ENCODE measurements at regions of chr3 and their contacts with region 1.

Region 1: DNA sequence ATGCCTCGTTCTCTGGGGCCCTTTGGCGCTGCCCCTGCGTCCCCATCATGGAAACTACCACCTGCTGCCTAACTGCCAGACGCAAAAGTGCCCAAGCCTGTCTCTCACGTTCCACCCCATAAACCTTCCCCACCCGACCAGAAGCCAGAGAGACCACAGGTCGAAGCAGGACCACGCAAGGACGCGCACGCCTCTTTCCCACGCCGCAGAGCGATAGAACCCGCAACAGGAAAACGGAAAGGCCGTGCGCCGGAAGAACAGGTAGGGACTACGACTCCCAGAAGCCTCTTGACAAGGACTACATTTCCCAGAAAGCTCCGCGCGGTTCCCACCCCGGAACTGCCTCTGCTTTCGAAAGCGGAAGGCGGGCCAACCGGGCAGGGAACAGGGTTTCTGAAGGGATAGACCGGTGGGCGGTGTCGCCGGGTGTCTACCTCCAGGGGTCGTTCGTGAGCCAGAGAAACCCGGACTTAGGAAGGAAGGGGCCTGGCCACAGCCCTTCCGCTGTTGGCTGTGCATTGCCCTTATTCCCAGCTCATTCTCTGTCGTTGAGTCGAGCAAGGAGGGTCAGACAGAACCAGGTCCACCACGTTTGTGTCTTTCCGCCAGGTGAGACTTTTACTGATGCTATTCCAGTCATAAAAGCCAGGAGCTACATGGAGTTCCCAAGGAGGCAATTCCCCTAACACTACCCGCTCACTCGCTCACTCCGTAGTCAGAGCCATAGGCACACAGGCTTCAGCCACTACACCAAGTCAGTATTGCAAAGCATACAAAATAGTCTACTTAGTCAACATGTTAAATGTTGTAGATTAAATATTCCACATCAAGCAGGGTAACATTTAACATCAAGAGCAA is 56.6 kb upstream of the ZBTB38 start:
- DNase-seq: peak; percentile 93 to 99 (median 97)
- ATAC-seq: peak; percentile 88
- H3K4me3 ChIP-seq: peak overlapping the region; percentile 86
- H3K4me3 Mint-ChIP-seq: peak overlapping the region; percentile 97
- H3K27ac ChIP-seq: peak overlapping the region; percentile 62 to 75
- H3K27ac Mint-ChIP-seq: peak overlapping the region; percentile 92
- H3K4me1 ChIP-seq: peaks cover 48% of the 10 kb centered on the region
- H3K4me1 Mint-ChIP-seq: peaks cover 67% of the 10 kb centered on the region
- H3K27me3 ChIP-seq: no peaks in the 10 kb centered on the region
- H3K27me3 Mint-ChIP-seq: no peaks in the 10 kb centered on the region
- CTCF ChIP-seq: peak; percentile 65

Region 2: GRCh38 chr3:141266797-141267555 is 44.7 kb before region 1 on chr3:
- CTCF ChIA-PET with region 1: no interaction called
- POLR2A ChIA-PET with region 1: interaction called, 34 read pairs
- intact Hi-C with region 1: no loop called
- DNase-seq: peak in 13 of 14 experiments; percentile 7 to 71 (median 51)
- ATAC-seq: peak; percentile 81
- H3K4me3 ChIP-seq: peak overlapping the region; percentile 64
- H3K4me3 Mint-ChIP-seq: peak overlapping the region; percentile 90
- H3K27ac ChIP-seq: peak overlapping the region; percentile 72 to 84
- H3K27ac Mint-ChIP-seq: peak overlapping the region; percentile 96
- H3K4me1 ChIP-seq: peaks cover 35% of the 10 kb centered on the region
- H3K4me1 Mint-ChIP-seq: peaks cover 49% of the 10 kb centered on the region
- H3K27me3 ChIP-seq: no peaks in the 10 kb centered on the region
- H3K27me3 Mint-ChIP-seq: no peaks in the 10 kb centered on the region
- CTCF ChIP-seq: no peak

Region 3: DNA sequence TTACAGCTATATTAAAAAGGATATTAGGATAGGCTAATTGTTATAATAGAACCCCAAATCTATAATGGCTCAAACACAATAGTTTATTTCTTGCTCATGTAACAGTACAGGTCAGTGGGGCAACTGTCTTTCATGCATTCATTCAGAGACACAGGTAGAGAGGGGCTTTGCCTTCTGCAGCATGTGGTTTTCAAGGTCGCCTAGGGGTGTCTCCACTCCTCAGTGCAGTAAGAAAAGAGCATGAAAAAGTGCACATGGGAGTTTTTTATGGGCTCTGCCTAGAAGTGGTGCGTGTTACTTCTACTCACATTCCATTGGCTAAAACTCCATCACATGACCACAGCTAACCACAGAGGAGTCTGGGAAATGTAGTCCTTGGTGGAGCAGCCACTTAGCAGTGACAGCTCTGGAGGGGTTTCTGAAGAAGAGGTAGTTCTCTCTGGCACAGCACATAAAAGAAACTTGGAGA is 58.4 kb after region 1 on chr3:
- CTCF ChIA-PET with region 1: interaction called, 16 read pairs
- POLR2A ChIA-PET with region 1: interaction called, 5 read pairs
- intact Hi-C with region 1: loop called (anchors 1 to 5 kb)
- DNase-seq: peak; percentile 20 to 94 (median 42)
- ATAC-seq: peak; percentile 100
- H3K4me3 ChIP-seq: no peak overlapping the region
- H3K4me3 Mint-ChIP-seq: no peak overlapping the region
- H3K27ac ChIP-seq: no peak overlapping the region
- H3K27ac Mint-ChIP-seq: peak overlapping the region; percentile 3
- H3K4me1 ChIP-seq: no peaks in the 10 kb centered on the region
- H3K4me1 Mint-ChIP-seq: peaks cover 8% of the 10 kb centered on the region
- H3K27me3 ChIP-seq: no peaks in the 10 kb centered on the region
- H3K27me3 Mint-ChIP-seq: no peaks in the 10 kb centered on the region
- CTCF ChIP-seq: peak; percentile 53

Region 4: DNA sequence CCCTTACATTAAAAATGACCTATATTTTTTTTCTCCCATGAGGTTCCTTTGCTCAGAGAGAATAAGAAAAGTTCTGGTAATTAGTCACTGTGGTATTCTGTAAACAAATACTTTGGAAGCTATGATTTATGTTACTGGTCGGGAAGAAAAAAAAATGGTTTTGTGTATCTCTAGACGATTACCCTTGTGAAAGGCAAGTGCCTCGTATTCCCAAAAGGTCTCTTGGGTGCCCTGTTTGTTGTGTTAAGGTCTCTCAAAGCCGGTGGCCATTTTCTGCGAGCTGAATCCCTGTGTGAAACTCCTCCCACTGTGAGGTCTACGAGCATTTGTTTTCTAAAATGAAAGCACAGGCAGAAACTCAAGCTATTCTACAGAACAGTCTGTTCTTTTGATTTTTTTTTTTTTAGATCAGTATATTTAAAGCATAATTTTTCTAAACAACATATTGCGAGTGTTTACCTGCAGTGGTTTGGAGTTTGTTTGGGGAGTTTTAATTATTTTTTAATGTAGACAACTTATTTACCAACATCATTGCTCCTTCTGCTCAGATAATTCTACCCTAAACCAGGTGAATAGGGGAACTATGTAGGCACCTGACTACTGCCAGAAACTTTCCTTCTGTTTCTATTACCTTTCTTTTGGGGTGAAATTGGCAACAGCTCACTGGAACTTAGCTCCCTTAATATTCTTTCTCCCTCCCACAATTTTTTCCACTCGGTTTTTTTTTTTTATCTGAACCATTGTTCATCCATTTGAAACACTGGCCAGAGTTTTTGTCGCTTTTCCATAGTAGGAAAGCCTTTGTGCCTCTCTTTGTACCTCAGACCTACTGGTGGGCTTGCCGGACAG is 100.6 kb after region 1 on chr3:
- CTCF ChIA-PET with region 1: interaction called, 7 read pairs
- POLR2A ChIA-PET with region 1: interaction called, 18 read pairs
- intact Hi-C with region 1: no loop called
- DNase-seq: peak; percentile 33 to 87 (median 48)
- ATAC-seq: peak; percentile 69
- H3K4me3 ChIP-seq: peak overlapping the region; percentile 31
- H3K4me3 Mint-ChIP-seq: peak overlapping the region; percentile 82
- H3K27ac ChIP-seq: peak overlapping the region; percentile 65 to 87
- H3K27ac Mint-ChIP-seq: peak overlapping the region; percentile 98
- H3K4me1 ChIP-seq: peaks cover 67% of the 10 kb centered on the region
- H3K4me1 Mint-ChIP-seq: peaks cover 80% of the 10 kb centered on the region
- H3K27me3 ChIP-seq: no peaks in the 10 kb centered on the region
- H3K27me3 Mint-ChIP-seq: no peaks in the 10 kb centered on the region
- CTCF ChIP-seq: no peak

Region 5: GRCh38 chr3:141561426-141562034 is 249.8 kb after region 1 on chr3:
- CTCF ChIA-PET with region 1: interaction called, 7 read pairs
- POLR2A ChIA-PET with region 1: interaction called, 3 read pairs
- intact Hi-C with region 1: loop called (anchors 5 kb)
- DNase-seq: peak in 9 of 14 experiments; percentile 14 to 85 (median 39)
- ATAC-seq: peak; percentile 60
- H3K4me3 ChIP-seq: no peak overlapping the region
- H3K4me3 Mint-ChIP-seq: peak overlapping the region; percentile 55
- H3K27ac ChIP-seq: no peak overlapping the region
- H3K27ac Mint-ChIP-seq: peak overlapping the region; percentile 67
- H3K4me1 ChIP-seq: peaks cover 3% of the 10 kb centered on the region
- H3K4me1 Mint-ChIP-seq: peaks cover 40% of the 10 kb centered on the region
- H3K27me3 ChIP-seq: no peaks in the 10 kb centered on the region
- H3K27me3 Mint-ChIP-seq: no peaks in the 10 kb centered on the region
- CTCF ChIP-seq: peak; percentile 98

Measured in CD4-positive, alpha-beta T cell (primary cell).